ENCODE measurements at regions of chr10 and their contacts with region 1.

Region 1: GRCh38 chr10:69639291-69640195 is 9.5 kb downstream of the FAM241B start:
- DNase-seq: peak; percentile 81
- ATAC-seq: peak; percentile 58

Region 2: DNA sequence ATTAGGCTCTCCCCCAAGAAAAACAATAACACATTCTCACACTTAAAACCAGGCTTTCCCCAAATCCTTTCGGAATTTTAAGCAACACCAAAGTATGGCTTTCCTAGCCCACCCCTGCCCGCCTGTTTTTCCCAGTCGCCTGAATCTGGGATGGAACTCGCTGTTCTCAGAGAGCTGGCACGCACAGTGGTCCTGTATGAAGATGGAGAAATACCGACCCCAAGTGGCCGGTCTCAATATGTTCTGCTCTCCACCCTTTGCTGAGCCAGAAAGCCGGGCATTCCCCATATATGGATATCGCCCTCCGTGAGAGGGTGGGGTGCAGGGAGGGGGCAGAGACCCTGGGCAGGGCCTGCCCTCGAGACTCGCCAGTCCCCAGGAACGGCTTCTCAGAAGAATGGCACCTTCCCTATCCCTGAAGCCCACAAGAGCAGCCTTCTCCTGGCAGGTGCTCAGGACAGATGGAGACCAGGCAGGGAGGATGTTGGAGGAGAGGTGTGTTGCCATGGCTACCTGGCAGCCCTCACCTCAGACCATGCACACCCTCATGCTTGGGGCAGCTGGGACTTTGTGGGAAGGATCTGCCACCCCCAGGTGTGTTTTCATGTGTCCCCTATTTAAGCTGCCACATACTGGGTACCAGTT is 226.2 kb before region 1 on chr10:
- intact Hi-C with region 1: loop called (anchors 10 kb)
- DNase-seq: peak; percentile 75
- ATAC-seq: peak; percentile 55

Region 3: GRCh38 chr10:69515699-69516259 is 123.8 kb before region 1 on chr10:
- intact Hi-C with region 1: loop called (anchors 5 kb)
- DNase-seq: peak; percentile 78
- ATAC-seq: peak; percentile 56

Region 4: GRCh38 chr10:69914398-69915214 is 275.1 kb after region 1 on chr10:
- intact Hi-C with region 1: loop called (anchors 10 kb)
- DNase-seq: peak; percentile 85
- ATAC-seq: peak; percentile 89

Measured in sciatic nerve (tissue), 2 donors.